Kidney (tissue), 22 donors: ENCODE measurements at regions of chr11 and their contacts with region 1.

Region 1: DNA sequence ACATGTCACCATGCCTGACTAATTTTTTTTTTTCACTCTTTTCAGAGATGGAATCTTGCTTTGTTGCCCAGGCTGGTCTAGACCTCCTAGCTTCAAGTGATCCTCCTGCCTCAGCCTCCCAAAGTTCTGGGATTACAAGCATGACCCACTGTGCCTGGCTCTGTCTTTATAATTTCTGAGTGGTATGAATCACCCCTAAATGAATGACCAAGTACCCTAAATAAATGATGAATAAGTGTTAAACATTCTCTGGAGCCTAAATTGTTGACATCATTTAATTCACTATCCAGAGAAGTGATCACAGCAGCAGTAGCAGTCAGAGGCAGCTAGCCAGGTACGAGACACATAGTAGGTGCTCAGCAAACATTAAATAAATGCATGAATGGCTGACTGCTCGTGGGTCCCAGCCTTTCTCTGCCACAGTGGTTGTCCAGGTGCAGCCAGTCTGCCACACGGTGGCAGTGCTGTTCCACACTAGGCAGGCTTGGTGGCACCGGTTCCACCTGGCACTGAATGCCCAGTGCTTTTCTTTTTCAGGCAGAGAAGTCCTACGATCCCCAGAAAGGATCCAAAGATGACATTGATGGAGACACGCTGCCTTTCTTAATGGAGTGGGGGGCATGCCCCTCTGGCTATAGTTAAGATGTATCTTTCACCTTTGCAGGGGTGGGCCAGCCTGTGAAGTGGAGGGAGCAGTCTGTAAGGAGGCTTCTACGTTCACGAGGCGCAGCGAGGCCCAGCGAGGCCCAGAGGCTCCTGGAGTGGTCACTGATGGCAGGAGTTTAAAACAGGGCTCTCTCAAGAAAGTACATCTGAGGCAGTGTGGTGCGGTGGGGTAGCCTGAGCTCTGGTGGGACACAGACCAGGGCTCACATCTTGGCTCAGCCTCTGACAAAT is 8.7 kb upstream of the TTC12 start:
- DNase-seq: peak; percentile 77 to 90 (median 81)
- H3K4me3 ChIP-seq: no peak overlapping the region
- H3K27ac ChIP-seq: no peak overlapping the region
- H3K4me1 ChIP-seq: no peaks in the 10 kb centered on the region
- H3K27me3 ChIP-seq: no peaks in the 10 kb centered on the region
- CTCF ChIP-seq: peak; percentile 87

Region 2: GRCh38 chr11:113532697-113533424 is 227.2 kb after region 1 on chr11:
- intact Hi-C with region 1: loop called (anchors 10 kb)
- DNase-seq: peak; percentile 75 to 86 (median 77)
- H3K4me3 ChIP-seq: no peak overlapping the region
- H3K27ac ChIP-seq: no peak overlapping the region
- H3K4me1 ChIP-seq: no peaks in the 10 kb centered on the region
- H3K27me3 ChIP-seq: no peaks in the 10 kb centered on the region
- CTCF ChIP-seq: peak; percentile 58

Region 3: DNA sequence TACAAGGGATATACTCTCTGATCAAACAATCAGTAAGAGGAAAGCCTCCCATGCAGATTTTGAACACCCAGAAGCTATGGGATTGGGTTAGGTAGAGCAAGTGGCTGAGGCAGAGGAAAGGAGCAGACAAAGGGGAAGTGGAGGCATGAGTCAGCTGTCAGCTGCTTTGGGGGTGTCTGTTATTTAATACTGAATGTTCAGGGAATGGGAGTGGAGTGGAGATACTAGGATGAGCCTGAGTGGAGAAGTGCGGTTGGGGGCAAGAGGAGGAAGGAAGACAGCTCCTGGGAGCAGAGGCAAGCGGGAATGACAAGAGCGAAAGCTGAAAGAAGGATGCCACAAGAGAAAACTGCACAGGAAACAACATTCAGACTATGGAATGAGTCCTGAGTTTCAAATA is 423.1 kb after region 1 on chr11:
- intact Hi-C with region 1: loop called (anchors 10 kb)
- DNase-seq: no peak
- H3K4me3 ChIP-seq: no peak overlapping the region
- H3K27ac ChIP-seq: no peak overlapping the region
- H3K4me1 ChIP-seq: peaks cover 0 to 4% (median 0%) of the 10 kb centered on the region in 3 donors
- H3K27me3 ChIP-seq: no peaks in the 10 kb centered on the region
- CTCF ChIP-seq: no peak